ENCODE measurements at regions of chr1 and their contacts with region 1.

Region 1: GRCh38 chr1:84753516-84754385 is 63.5 kb upstream of the SSX2IP start:
- DNase-seq: peak; percentile 82
- ATAC-seq: peak; percentile 89
- H3K4me3 ChIP-seq: no peak overlapping the region
- H3K27ac ChIP-seq: no peak overlapping the region
- H3K4me1 ChIP-seq: 0 out of 2 replicates have a peak, but pooled peaks cover 4% of the 10 kb centered on the region
- H3K27me3 ChIP-seq: no peaks in the 10 kb centered on the region
- CTCF ChIP-seq: peak; percentile 97

Region 2: DNA sequence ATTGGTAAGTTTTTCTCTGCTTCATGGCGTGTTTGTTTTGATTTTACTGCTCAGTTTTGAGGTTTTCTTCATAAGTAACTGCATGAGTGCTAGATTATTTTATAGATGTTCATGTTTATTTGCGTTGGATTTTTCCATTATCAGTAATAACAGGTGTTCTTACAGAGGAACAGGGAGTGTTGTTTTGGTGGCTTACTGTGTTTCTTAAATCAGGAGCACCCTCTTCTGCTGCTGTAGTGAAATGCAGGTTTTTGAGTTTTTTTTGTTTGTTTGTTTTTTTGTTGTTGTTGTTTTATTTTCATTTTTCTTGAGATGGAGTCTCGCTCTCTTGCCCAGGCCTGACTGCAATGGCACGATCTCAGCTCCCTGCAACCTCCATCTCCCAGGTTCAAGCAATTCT is 212.1 kb before region 1 on chr1:
- CTCF ChIA-PET with region 1: no interaction called
- POLR2A ChIA-PET with region 1: no interaction called
- intact Hi-C with region 1: loop called (anchors 1 kb)
- DNase-seq: peak; percentile 14
- ATAC-seq: no peak
- H3K4me3 ChIP-seq: no peak overlapping the region
- H3K27ac ChIP-seq: no peak overlapping the region
- H3K4me1 ChIP-seq: peaks cover 16% of the 10 kb centered on the region
- H3K27me3 ChIP-seq: no peaks in the 10 kb centered on the region
- CTCF ChIP-seq: peak; percentile 65

Region 3: DNA sequence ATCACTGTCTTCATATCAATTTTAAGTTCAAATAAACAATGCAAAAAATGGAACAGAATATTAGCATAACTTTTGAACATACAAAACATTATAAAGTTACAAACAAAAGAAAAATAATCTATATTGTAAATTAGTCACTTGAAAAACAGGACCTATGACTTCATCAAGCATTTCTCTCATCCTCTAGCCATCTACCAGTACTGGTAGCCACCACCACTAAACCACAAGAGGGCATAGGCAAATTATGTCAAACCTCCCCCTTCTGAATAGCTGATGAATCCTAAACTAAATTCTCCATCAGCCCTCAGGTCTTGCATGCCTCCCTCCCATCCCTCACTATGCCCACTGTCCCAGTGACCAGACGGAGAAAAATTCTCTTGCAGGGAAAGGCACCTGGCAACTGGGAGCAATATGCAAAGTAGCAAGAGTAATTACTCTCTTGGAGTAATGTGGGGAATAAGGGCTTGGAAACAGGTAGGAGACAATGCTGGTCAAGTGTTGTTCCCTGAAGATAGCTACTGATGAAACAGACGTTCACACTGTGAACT is 100.5 kb before region 1 on chr1:
- CTCF ChIA-PET with region 1: no interaction called
- POLR2A ChIA-PET with region 1: no interaction called
- intact Hi-C with region 1: loop called (anchors 5 kb)
- DNase-seq: peak; percentile 47
- ATAC-seq: peak; percentile 67; the same call in 1 of the 2 replicates
- H3K4me3 ChIP-seq: no peak overlapping the region
- H3K27ac ChIP-seq: no peak overlapping the region
- H3K4me1 ChIP-seq: 0 out of 2 replicates have a peak, but pooled peaks cover 5% of the 10 kb centered on the region
- H3K27me3 ChIP-seq: no peaks in the 10 kb centered on the region
- CTCF ChIP-seq: peak; percentile 47

Region 4: DNA sequence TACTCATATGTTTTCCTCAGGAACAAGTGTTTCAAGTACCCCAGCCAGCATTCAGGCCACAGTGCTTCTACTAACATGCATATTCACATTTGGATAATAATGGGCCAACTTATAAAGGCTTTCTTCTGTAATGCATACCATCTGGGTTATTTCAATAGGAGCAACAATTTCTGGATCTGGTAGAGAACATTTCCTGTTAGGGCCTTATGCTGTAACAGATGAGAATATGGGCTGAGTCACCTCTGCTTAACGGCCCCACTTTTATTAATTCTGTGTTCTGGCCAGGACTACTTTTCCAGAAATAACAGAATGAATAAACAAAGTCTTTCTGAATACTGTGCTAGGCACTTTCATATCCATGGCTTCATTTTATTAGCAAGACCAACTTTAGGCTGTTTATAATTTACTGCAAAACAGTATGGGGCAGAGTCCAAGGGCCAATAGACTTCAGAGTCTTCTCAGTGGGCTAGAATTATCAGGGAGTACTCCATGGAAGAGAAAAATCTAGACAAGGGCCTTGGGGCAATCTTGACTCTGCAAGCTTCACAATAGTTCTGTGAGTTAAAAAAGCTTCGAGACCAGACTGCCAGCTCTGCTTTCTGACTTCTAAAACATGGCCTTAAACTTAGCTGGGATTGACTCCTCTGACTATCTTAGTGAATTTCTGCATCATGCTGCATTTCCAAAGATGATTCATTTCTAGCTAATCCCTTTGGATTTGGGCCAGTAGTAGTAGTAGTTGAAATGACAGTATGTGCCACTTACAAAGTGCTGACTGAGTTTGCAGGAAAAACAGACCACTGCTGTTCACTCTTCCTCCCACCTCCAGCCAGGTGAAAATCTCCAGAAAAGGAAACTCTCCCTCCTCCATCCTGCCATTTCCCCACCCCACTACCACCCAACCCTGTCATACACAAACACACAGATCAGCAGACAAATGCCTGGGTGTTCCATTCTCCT is 55.3 kb before region 1 on chr1:
- CTCF ChIA-PET with region 1: no interaction called
- POLR2A ChIA-PET with region 1: no interaction called
- intact Hi-C with region 1: loop called (anchors 5 kb)
- DNase-seq: peak; percentile 90
- ATAC-seq: peak; percentile 93
- H3K4me3 ChIP-seq: peak overlapping the region; percentile 17; the same call in 1 of the 2 replicates
- H3K27ac ChIP-seq: peak overlapping the region; percentile 73
- H3K4me1 ChIP-seq: peaks cover 21% of the 10 kb centered on the region
- H3K27me3 ChIP-seq: no peaks in the 10 kb centered on the region
- CTCF ChIP-seq: no peak